SK-N-SH (cell line): ENCODE measurements at regions of chr15 and their contacts with region 1.

Region 1: DNA sequence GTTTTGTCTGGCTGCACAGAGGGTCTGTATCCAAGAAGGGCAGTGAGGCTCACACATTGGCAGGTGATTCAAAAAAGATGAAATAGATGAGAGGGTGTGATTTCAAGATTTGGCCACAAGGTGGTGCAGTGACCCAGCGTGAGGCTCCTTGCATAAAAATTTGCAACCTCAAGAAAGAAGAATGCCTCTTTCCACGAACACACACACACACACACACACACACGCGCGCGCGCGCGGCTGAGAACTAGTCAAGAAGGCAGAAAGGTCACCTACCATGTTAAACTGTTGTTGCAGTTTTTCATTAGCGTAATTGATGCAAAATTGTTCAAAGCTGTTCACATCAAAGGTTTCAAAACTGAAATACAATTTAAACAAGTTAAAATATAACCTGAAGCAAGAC is 39.2 kb downstream of the MYO5C start:
- DNase-seq: peak; percentile 76
- H3K4me3 ChIP-seq: no peak overlapping the region; a peak in 1 of 4 replicates
- H3K27ac ChIP-seq: no peak overlapping the region
- H3K4me1 ChIP-seq: peaks cover under 1 to 14% of the 10 kb centered on the region in 2 experiments; a peak in 3 of 4 replicates
- H3K27me3 ChIP-seq: no peaks in the 10 kb centered on the region
- CTCF ChIP-seq: peak; percentile 74
- EP300 ChIP-seq: no peak
- RAD21 ChIP-seq: peak; percentile 89

Region 2: DNA sequence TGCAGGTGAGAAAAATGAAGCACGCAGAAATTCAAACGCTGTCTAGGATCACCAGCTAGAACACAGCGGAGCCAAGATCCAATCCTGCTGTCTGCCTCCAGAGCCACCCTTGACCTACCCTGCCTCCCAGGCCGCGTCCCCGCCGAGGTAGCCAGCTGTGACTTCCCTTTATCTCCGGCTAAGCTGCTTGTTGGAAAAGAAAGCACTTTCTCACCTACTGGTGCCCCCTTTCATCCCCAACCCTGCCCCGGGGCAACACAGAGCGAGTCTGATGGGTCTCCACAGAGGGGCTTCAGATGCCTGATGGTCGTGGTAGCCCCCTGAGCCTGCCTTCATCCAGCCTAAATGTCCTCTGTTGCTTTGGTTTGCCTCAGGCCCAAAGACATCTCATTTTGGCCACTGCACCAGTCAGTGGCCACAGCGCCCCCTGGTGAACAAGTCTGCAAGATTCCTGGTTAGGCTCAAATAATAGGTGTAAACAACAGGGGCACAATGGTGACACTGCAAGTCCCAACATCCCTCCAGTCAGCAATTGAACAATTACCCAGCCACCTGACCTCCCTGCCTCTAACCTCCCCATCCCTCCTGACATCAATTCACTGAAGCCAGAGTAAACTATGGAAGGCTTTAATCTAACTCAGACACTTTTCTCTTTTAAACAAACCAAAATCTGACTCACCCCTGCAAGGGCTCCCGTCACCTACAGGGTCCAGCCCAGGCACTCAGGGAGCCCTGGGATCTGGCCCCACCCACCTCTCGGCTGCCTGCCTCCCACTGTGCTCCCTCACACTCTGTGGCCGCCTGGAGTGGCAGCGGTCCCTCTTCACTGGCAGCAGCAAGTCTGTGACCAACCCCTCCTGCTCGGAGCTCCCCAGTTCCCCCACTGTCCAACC is 116.5 kb before region 1 on chr15:
- CTCF ChIA-PET with region 1: no interaction called
- POLR2A ChIA-PET with region 1: no interaction called
- DNase-seq: peak; percentile 74
- H3K4me3 ChIP-seq: no peak overlapping the region; a peak in 1 of 4 replicates
- H3K27ac ChIP-seq: peak overlapping the region in 1 of 2 experiments; percentile 28; a peak in 1 of 4 replicates
- H3K4me1 ChIP-seq: peaks cover 24 to 27% of the 10 kb centered on the region in 2 experiments
- H3K27me3 ChIP-seq: no peaks in the 10 kb centered on the region
- CTCF ChIP-seq: peak; percentile 89
- EP300 ChIP-seq: no peak
- RAD21 ChIP-seq: peak; percentile 76

Region 3: DNA sequence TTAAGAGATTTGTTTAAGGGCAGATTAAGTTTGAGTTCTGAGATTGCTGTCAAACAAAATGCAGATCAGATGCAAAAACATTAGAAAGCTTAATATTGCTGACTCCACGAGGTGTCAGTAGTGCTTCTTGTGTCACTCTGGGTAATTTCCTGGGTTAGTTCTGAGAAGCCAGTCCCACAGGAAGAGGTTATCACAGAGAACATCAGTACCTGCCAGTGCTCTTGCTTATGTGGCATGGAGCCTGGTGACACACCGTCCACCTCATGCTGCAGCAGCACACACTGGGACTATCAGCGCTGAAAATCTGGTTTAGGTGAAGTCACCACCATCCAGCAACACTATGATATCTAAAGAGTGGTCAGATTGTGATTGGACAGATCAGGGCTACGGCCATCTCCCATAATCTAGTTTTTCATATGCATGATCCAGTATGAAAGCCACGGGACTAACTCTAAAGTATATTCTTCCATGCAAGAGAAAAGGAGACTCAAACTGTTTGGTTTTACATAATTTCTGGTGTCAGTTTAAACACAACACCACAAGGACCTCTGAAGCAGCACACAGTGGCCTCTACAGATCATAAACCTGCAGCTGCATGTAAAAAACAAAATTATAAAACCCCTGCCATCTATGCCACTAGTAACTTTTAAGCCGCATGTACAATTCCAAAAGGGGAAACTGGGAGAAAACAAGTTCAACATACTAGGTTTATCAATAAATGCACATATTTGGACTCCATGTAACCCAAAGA is 75.3 kb after region 1 on chr15:
- CTCF ChIA-PET with region 1: interaction called, 13 read pairs
- POLR2A ChIA-PET with region 1: no interaction called
- DNase-seq: peak; percentile 48
- H3K4me3 ChIP-seq: no peak overlapping the region
- H3K27ac ChIP-seq: no peak overlapping the region
- H3K4me1 ChIP-seq: peaks cover 3 to 10% of the 10 kb centered on the region in 2 experiments; a peak in 3 of 4 replicates
- H3K27me3 ChIP-seq: no peaks in the 10 kb centered on the region
- CTCF ChIP-seq: peak; percentile 63
- EP300 ChIP-seq: no peak
- RAD21 ChIP-seq: peak; percentile 83

Region 4: GRCh38 chr15:52552303-52552702 is 295.9 kb after region 1 on chr15:
- CTCF ChIA-PET with region 1: interaction called, 11 read pairs
- POLR2A ChIA-PET with region 1: no interaction called
- DNase-seq: no peak
- H3K4me3 ChIP-seq: no peak overlapping the region
- H3K27ac ChIP-seq: no peak overlapping the region
- H3K4me1 ChIP-seq: peaks cover 3 to 6% of the 10 kb centered on the region in 2 experiments; a peak in 1 of 4 replicates
- H3K27me3 ChIP-seq: no peaks in the 10 kb centered on the region
- CTCF ChIP-seq: no peak
- EP300 ChIP-seq: no peak
- RAD21 ChIP-seq: no peak